Endothelial cell of umbilical vein (primary cell): ENCODE measurements at regions of chr2 and their contacts with region 1.

Region 1: GRCh38 chr2:240851078-240851991 is 17.3 kb upstream of the AGXT start:
- DNase-seq: peak; percentile 78
- H3K4me3 ChIP-seq: no peak overlapping the region
- H3K27ac ChIP-seq: no peak overlapping the region
- H3K4me1 ChIP-seq: no peaks in the 10 kb centered on the region
- H3K27me3 ChIP-seq: no peaks in the 10 kb centered on the region
- CTCF ChIP-seq: peak; percentile 92 to 95
- POLR2A ChIP-seq: no peak

Region 2: GRCh38 chr2:240962300-240963064 is 111.1 kb after region 1 on chr2:
- CTCF ChIA-PET with region 1: no interaction called
- POLR2A ChIA-PET with region 1: no interaction called
- dilution Hi-C with region 1: no loop called
- intact Hi-C with region 1: no loop called
- DNase-seq: peak; percentile 32
- H3K4me3 ChIP-seq: no peak overlapping the region
- H3K27ac ChIP-seq: no peak overlapping the region
- H3K4me1 ChIP-seq: no peaks in the 10 kb centered on the region
- H3K27me3 ChIP-seq: no peaks in the 10 kb centered on the region
- CTCF ChIP-seq: no peak
- POLR2A ChIP-seq: no peak

Region 3: DNA sequence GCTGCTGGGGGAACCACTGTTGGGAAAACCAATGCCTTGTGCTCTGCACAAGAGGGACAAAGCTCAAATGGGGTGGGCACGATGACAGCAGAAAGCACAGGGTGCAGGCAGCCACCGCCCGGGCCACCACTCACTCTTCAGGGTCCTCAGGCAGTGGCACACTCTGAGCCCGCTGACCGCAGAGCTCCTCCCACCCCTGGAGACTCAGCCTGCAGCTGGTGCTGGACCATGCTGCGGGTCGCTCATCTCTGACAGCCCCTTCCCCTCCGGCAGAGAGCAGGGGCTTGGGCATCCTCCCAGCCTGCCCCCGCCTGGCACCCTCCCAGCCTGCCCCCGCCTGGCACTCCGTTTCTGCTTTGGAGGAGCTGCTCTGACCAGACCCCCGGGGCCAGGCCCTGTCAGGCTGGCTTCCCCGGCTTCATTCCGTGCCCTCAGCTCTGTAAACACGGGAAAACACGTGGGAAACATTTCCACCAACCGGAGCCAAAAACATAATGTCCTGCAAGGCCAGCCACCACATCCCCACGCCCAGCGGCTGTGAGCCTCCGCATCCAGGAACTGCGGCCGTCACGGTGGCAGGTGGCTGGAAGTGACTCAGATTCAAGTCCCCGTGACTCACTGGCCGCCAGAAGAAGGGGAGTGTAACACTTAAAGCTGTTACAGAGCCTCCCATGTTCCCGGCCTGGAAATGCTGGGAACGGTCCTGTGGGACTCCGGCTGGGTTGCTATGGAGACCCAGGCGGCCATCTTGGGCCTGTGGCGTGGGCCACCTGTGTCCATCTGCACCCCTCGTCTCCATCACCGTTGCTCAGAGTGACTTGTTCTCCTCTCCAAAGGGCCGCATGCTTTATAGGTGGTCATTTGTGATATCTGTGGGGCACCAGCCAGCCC is 140.3 kb after region 1 on chr2:
- CTCF ChIA-PET with region 1: interaction called, 9 read pairs
- POLR2A ChIA-PET with region 1: no interaction called
- dilution Hi-C with region 1: no loop called
- intact Hi-C with region 1: loop called (anchors 1 kb)
- DNase-seq: peak; percentile 98
- H3K4me3 ChIP-seq: no peak overlapping the region
- H3K27ac ChIP-seq: peak overlapping the region; percentile 73
- H3K4me1 ChIP-seq: peaks cover 28% of the 10 kb centered on the region
- H3K27me3 ChIP-seq: no peaks in the 10 kb centered on the region
- CTCF ChIP-seq: no peak
- POLR2A ChIP-seq: no peak

Region 4: DNA sequence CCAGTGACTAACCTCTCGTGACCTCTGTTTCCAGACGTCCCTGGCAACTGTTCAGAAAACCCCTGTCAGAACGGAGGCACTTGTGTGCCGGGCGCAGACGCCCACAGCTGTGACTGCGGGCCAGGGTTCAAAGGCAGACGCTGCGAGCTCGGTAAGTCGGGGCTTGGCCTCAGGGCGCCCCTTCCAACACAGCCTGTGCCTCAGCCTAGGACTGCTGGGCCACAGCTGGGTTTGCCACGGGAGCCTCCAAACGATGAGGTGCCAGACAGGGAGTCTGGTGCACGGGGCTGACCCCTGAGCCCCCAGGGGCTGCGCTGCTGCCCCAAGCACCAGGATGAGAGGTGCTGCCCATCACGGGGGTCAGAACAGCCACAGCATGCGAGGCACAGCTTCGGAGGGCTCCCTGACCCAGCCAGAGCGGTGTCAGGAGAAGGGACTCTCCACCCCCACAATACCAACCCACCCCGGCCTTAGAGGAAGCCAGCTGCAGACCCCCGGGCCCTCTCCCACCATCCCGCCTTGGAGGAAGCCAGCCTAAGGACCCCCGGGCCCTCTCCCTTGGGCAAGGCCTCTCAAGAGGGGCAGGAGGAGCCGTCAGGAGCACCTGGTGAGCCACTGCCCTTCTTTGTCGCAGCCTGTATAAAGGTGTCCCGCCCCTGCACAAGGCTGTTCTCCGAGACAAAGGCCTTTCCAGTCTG is 230.5 kb after region 1 on chr2:
- CTCF ChIA-PET with region 1: interaction called, 9 read pairs
- POLR2A ChIA-PET with region 1: no interaction called
- dilution Hi-C with region 1: no loop called
- intact Hi-C with region 1: loop called (anchors 1 kb)
- DNase-seq: no peak
- H3K4me3 ChIP-seq: no peak overlapping the region
- H3K27ac ChIP-seq: no peak overlapping the region
- H3K4me1 ChIP-seq: no peaks in the 10 kb centered on the region
- H3K27me3 ChIP-seq: no peaks in the 10 kb centered on the region
- CTCF ChIP-seq: no peak
- POLR2A ChIP-seq: no peak

Region 5: GRCh38 chr2:241149925-241150659 is 298.8 kb after region 1 on chr2 and contains the start of gene PPP1R7:
- CTCF ChIA-PET with region 1: interaction called, 3 read pairs
- POLR2A ChIA-PET with region 1: no interaction called
- dilution Hi-C with region 1: no loop called
- intact Hi-C with region 1: loop called (anchors 10 kb)
- DNase-seq: peak; percentile 95
- H3K4me3 ChIP-seq: peak within 1 kb of the TSS; percentile 76 to 85 (median 78)
- H3K27ac ChIP-seq: no peak within 1 kb of the TSS
- H3K4me1 ChIP-seq: peaks cover 15% of the 10 kb centered on the region
- H3K27me3 ChIP-seq: no peaks in the 10 kb centered on the region
- CTCF ChIP-seq: peak in 1 of 2 donors; percentile 16
- POLR2A ChIP-seq: peak; percentile 74
- total RNA-seq, gene PPP1R7: 60.8 and 68.2 TPM in 2 replicates

Region 6: DNA sequence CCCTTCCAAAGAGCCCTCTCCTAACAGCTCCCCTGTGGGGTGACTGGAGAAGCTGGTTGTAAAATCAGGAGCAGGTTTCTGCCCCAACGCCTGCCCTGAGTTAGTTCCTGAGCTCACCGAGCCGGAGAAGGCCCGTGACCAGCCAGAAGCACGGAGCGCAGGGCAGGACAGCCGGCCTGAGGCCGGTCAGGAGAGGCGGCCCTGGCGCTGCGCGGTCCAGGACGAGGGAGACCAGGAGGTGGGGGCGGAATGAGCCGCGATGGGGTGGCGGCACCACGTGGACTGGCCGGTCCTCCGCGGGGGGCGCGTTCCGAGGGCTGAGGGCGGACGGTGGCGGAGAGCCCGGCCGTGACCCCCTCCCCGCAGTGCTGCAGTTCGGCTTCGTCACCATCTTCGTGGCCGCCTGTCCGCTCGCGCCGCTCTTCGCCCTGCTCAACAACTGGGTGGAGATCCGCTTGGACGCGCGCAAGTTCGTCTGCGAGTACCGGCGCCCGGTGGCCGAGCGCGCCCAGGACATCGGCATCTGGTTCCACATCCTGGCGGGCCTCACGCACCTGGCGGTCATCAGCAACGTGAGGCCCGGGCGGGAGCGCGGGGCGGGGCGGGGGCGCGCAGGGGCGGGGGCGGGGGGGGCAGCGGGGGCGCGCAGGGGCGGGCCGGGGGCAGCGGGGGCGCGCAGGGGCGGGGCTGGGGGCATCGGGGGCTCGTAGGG is 366.1 kb after region 1 on chr2:
- CTCF ChIA-PET with region 1: interaction called, 7 read pairs
- POLR2A ChIA-PET with region 1: no interaction called
- dilution Hi-C with region 1: no loop called
- intact Hi-C with region 1: loop called (anchors 1 kb)
- DNase-seq: peak; percentile 63
- H3K4me3 ChIP-seq: peak overlapping the region in 2 of 3 experiments; percentile 16 to 40
- H3K27ac ChIP-seq: no peak overlapping the region
- H3K4me1 ChIP-seq: peaks cover 5% of the 10 kb centered on the region
- H3K27me3 ChIP-seq: no peaks in the 10 kb centered on the region
- CTCF ChIP-seq: no peak
- POLR2A ChIP-seq: no peak

Region 7: GRCh38 chr2:241659150-241659739 is 807.9 kb after region 1 on chr2:
- CTCF ChIA-PET with region 1: interaction called, 6 read pairs
- POLR2A ChIA-PET with region 1: no interaction called
- dilution Hi-C with region 1: no loop called
- intact Hi-C with region 1: loop called (anchors 1 kb)
- DNase-seq: peak; percentile 71
- H3K4me3 ChIP-seq: no peak overlapping the region
- H3K27ac ChIP-seq: no peak overlapping the region
- H3K4me1 ChIP-seq: no peaks in the 10 kb centered on the region
- H3K27me3 ChIP-seq: no peaks in the 10 kb centered on the region
- CTCF ChIP-seq: peak; percentile 60 to 70
- POLR2A ChIP-seq: no peak